HepG2 (cell line): ENCODE measurements at regions of chr4 and their contacts with region 1.

Region 1: GRCh38 chr4:137610960-137611359 is 78.7 kb upstream of the PCDH18 start:
- DNase-seq: peak; percentile 1
- ATAC-seq: peak; percentile 73
- H3K4me3 ChIP-seq: no peak overlapping the region
- H3K27ac ChIP-seq: no peak overlapping the region
- H3K4me1 ChIP-seq: no peaks in the 10 kb centered on the region
- H3K27me3 ChIP-seq: no peaks in the 10 kb centered on the region
- CTCF ChIP-seq: no peak
- EP300 ChIP-seq: no peak
- POLR2A ChIP-seq: no peak
- RAD21 ChIP-seq: no peak

Region 2: GRCh38 chr4:137124278-137124932 is 486.6 kb before region 1 on chr4:
- CTCF ChIA-PET with region 1: no interaction called
- POLR2A ChIA-PET with region 1: no interaction called
- in situ Hi-C with region 1: no loop called
- intact Hi-C with region 1: loop called (anchors 5 kb)
- DNase-seq: peak; percentile 17
- ATAC-seq: peak; percentile 97
- H3K4me3 ChIP-seq: no peak overlapping the region
- H3K27ac ChIP-seq: no peak overlapping the region
- H3K4me1 ChIP-seq: no peaks in the 10 kb centered on the region
- H3K27me3 ChIP-seq: no peaks in the 10 kb centered on the region
- CTCF ChIP-seq: peak; percentile 64
- EP300 ChIP-seq: no peak
- POLR2A ChIP-seq: no peak
- RAD21 ChIP-seq: no peak